ENCODE measurements at regions of chr11 and their contacts with region 1.

Region 1: GRCh38 chr11:111926505-111927391 is 8.0 kb downstream of the C11orf52 start:
- DNase-seq: peak; percentile 88 to 98 (median 96)
- ATAC-seq: peak; percentile 89
- H3K4me3 ChIP-seq: peak overlapping the region; percentile 80
- H3K4me3 Mint-ChIP-seq: peak overlapping the region; percentile 90
- H3K27ac ChIP-seq: peak overlapping the region; percentile 60 to 79
- H3K27ac Mint-ChIP-seq: peak overlapping the region; percentile 92
- H3K4me1 ChIP-seq: peaks cover 18% of the 10 kb centered on the region
- H3K4me1 Mint-ChIP-seq: peaks cover 20% of the 10 kb centered on the region
- H3K27me3 ChIP-seq: no peaks in the 10 kb centered on the region
- H3K27me3 Mint-ChIP-seq: no peaks in the 10 kb centered on the region
- CTCF ChIP-seq: no peak

Region 2: DNA sequence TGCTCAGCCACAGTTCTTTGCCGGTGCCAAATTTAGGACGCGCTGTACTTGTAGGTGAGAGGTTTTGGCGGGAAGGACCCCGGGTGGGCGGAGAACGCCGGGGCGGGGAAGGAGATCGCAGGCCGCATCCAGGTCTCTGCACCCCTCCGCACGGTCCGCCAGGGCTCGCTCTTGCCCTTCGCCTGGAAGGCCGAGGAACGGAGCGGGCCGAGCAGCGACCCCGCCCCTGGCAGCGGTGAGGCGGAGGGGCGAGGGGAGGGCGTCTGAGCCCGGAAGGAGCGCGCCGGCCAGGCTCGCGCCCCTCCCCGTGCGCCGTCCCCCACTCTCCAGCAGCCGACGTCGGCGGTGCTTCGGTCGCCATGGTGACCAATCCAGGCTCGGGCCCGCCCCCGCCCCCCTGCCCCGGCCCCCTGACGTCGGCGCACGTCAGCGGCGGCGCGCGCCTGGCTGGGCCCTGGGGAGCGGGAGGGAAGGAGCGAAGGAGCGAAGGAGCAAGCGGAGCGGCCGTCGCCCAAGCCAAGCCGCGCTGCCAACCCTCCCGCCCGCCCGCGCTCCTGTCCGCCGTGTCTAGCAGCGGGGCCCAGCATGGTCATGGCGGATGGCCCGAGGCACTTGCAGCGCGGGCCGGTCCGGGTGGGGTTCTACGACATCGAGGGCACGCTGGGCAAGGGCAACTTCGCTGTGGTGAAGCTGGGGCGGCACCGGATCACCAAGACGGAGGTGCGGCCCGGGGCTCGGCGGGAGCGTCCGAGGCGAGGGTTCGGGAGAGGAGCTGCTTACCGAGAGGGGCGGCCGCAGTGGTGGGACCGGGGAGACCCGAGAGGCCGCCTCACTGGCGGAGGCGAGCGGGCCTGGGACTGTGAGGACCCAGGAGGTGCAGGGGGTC is 324.5 kb before region 1 on chr11 and contains the start of gene SIK2:
- CTCF ChIA-PET with region 1: no interaction called
- POLR2A ChIA-PET with region 1: no interaction called
- intact Hi-C with region 1: loop called in 1 of 2 experiments (anchors 2 kb)
- DNase-seq: peak; percentile 75 to 97 (median 84)
- ATAC-seq: peak; percentile 80
- H3K4me3 ChIP-seq: peak within 1 kb of the TSS; percentile 93
- H3K4me3 Mint-ChIP-seq: peak within 1 kb of the TSS; percentile 99
- H3K27ac ChIP-seq: peak within 1 kb of the TSS; percentile 56 to 83
- H3K27ac Mint-ChIP-seq: peak within 1 kb of the TSS; percentile 92
- H3K4me1 ChIP-seq: peaks cover 19% of the 10 kb centered on the region
- H3K4me1 Mint-ChIP-seq: peaks cover 31% of the 10 kb centered on the region
- H3K27me3 ChIP-seq: no peaks in the 10 kb centered on the region
- H3K27me3 Mint-ChIP-seq: no peaks in the 10 kb centered on the region
- CTCF ChIP-seq: peak; percentile 76
- total RNA-seq, gene SIK2: 3.6 to 5.8 TPM

Region 3: GRCh38 chr11:111870886-111871692 is 55.7 kb before region 1 on chr11 and contains the start of gene ALG9:
- CTCF ChIA-PET with region 1: interaction called, 6 read pairs
- POLR2A ChIA-PET with region 1: interaction called, 26 read pairs
- intact Hi-C with region 1: no loop called
- DNase-seq: peak; percentile 82 to 92 (median 90)
- ATAC-seq: peak; percentile 83
- H3K4me3 ChIP-seq: peak within 1 kb of the TSS; percentile 82
- H3K4me3 Mint-ChIP-seq: peak within 1 kb of the TSS; percentile 90
- H3K27ac ChIP-seq: peak within 1 kb of the TSS; percentile 83 to 84
- H3K27ac Mint-ChIP-seq: peak within 1 kb of the TSS; percentile 93
- H3K4me1 ChIP-seq: peaks cover 19% of the 10 kb centered on the region
- H3K4me1 Mint-ChIP-seq: peaks cover 35% of the 10 kb centered on the region
- H3K27me3 ChIP-seq: no peaks in the 10 kb centered on the region
- H3K27me3 Mint-ChIP-seq: no peaks in the 10 kb centered on the region
- CTCF ChIP-seq: peak; percentile 26
- total RNA-seq, gene ALG9: 31.1 to 33.4 TPM

Region 4: GRCh38 chr11:111938687-111939160 is 12.0 kb after region 1 on chr11:
- CTCF ChIA-PET with region 1: interaction called, 9 read pairs
- POLR2A ChIA-PET with region 1: interaction called, 49 read pairs
- intact Hi-C with region 1: no loop called
- DNase-seq: peak in 5 of 14 experiments; percentile 11 to 62 (median 51)
- ATAC-seq: peak; percentile 72
- H3K4me3 ChIP-seq: no peak overlapping the region
- H3K4me3 Mint-ChIP-seq: peak overlapping the region; percentile 70
- H3K27ac ChIP-seq: peak overlapping the region in 1 of 2 donors; percentile 25
- H3K27ac Mint-ChIP-seq: peak overlapping the region; percentile 84
- H3K4me1 ChIP-seq: peaks cover 26% of the 10 kb centered on the region
- H3K4me1 Mint-ChIP-seq: peaks cover 39% of the 10 kb centered on the region
- H3K27me3 ChIP-seq: no peaks in the 10 kb centered on the region
- H3K27me3 Mint-ChIP-seq: no peaks in the 10 kb centered on the region
- CTCF ChIP-seq: no peak

Region 5: GRCh38 chr11:112024773-112025678 is 98.3 kb after region 1 on chr11 and contains the start of gene DLAT:
- CTCF ChIA-PET with region 1: interaction called, 3 read pairs
- POLR2A ChIA-PET with region 1: interaction called, 3 read pairs
- intact Hi-C with region 1: loop called in 1 of 2 experiments (anchors 1 kb)
- DNase-seq: peak; percentile 60 to 91 (median 75)
- ATAC-seq: peak; percentile 86
- H3K4me3 ChIP-seq: peak within 1 kb of the TSS; percentile 85
- H3K4me3 Mint-ChIP-seq: peak within 1 kb of the TSS; percentile 100
- H3K27ac ChIP-seq: peak within 1 kb of the TSS; percentile 78 to 84
- H3K27ac Mint-ChIP-seq: peak within 1 kb of the TSS; percentile 98
- H3K4me1 ChIP-seq: peaks cover 10% of the 10 kb centered on the region
- H3K4me1 Mint-ChIP-seq: peaks cover 43% of the 10 kb centered on the region
- H3K27me3 ChIP-seq: no peaks in the 10 kb centered on the region
- H3K27me3 Mint-ChIP-seq: no peaks in the 10 kb centered on the region
- CTCF ChIP-seq: no peak
- total RNA-seq, gene DLAT: 10.7 to 10.8 TPM

Region 6: DNA sequence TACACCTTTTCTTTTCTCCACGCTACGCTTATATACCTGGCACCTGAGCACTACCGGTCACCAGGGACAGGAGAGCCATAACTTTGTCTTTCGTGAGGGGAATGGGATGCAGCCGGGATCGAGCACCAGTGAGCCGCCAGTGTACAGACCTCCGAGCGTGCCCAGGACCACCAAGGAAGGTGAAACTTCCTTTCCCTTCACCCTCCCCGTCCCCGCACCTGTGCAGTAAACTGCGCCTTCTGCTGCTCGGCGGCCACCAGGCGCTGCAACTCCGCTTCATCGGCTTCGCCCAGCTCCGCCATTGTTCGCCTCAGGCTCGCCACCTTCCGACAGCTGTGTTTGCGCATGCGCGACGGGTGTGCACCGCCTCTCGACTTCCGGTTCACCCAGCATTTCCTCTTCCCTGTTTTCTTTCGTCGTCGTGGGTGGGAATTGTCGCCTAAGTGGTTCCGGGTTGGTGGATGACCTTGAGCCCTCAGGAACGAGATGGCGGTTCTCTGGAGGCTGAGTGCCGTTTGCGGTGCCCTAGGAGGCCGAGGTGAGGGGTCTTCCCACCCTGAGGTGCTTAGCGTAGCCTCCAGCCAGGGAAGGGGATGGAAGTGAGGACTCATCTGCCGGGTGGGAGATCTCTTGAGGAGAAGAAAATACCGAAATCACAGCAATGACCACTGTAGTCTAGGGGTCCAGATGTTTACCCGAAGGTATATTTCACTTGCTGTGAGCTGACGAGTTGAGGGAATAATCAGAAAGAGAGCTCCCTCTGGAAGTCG is 159.9 kb after region 1 on chr11 and contains the starts of genes SDHD and TIMM8B:
- CTCF ChIA-PET with region 1: no interaction called
- POLR2A ChIA-PET with region 1: interaction called, 14 read pairs
- intact Hi-C with region 1: loop called in 1 of 2 experiments (anchors 5 kb)
- DNase-seq: peak; percentile 91 to 99 (median 94)
- ATAC-seq: peak; percentile 93
- H3K4me3 ChIP-seq: peak within 1 kb of the TSS; percentile 88
- H3K4me3 Mint-ChIP-seq: peak within 1 kb of the TSS; percentile 99
- H3K27ac ChIP-seq: peak within 1 kb of the TSS; percentile 35 to 75
- H3K27ac Mint-ChIP-seq: peak within 1 kb of the TSS; percentile 94
- H3K4me1 ChIP-seq: peaks cover 32% of the 10 kb centered on the region
- H3K4me1 Mint-ChIP-seq: peaks cover 54% of the 10 kb centered on the region
- H3K27me3 ChIP-seq: no peaks in the 10 kb centered on the region
- H3K27me3 Mint-ChIP-seq: no peaks in the 10 kb centered on the region
- CTCF ChIP-seq: peak; percentile 29
- total RNA-seq, gene SDHD: 24.8 to 29.4 TPM
- total RNA-seq, gene TIMM8B: 9.1 to 10.5 TPM

Region 7: DNA sequence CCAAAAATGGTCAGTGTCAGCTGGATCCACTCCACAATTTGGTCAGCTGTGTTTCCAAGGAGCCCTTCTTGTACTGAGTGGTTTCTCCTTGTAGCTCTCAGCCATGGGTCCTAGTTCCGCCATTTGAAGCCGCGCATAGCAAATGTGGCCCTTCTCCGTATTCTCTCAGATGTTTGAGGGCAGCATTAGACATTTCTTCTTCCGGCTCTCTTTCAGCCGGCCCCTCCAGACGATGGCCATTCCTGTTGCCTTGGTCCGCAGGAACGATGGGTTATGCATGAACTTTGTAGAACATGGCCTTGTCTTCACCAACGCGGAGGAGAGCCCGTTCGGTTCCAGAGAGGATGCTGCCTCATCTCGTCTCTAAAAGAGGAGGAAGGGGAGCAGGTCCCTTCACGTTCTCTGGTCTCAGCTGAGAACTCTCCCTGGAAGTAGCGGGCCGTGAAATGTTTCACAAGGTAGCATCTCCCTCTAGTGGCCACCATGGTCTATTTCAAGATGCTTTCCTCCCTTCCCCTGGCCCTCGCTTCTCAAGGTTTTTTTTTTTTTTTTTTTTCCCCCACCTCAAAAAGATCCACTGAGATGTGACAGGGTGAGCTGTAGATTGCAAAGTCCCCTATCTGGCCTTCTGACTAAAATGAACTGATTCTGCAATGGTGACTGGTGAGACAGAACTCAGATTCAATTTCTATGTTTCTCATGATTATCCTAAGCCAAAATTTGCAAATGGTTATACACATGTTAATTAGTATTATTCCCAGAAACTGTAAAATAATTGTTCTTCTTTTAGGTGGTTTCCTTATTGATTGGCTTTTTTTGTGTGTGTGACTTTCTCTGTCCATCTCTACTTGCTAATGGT is 353.7 kb after region 1 on chr11:
- CTCF ChIA-PET with region 1: interaction called, 4 read pairs
- POLR2A ChIA-PET with region 1: interaction called, 6 read pairs
- intact Hi-C with region 1: loop called in 1 of 2 experiments (anchors 5 kb)
- DNase-seq: peak; percentile 38 to 90 (median 56)
- ATAC-seq: peak; percentile 90
- H3K4me3 ChIP-seq: peak overlapping the region; percentile 61
- H3K4me3 Mint-ChIP-seq: peak overlapping the region; percentile 92
- H3K27ac ChIP-seq: no peak overlapping the region
- H3K27ac Mint-ChIP-seq: peak overlapping the region; percentile 64
- H3K4me1 ChIP-seq: peaks cover 22% of the 10 kb centered on the region
- H3K4me1 Mint-ChIP-seq: peaks cover 17% of the 10 kb centered on the region
- H3K27me3 ChIP-seq: no peaks in the 10 kb centered on the region
- H3K27me3 Mint-ChIP-seq: no peaks in the 10 kb centered on the region
- CTCF ChIP-seq: peak; percentile 44